ENCODE measurements at regions of chr5 and their contacts with region 1.

Region 1: GRCh38 chr5:66828548-66829357 is 232.6 kb downstream of the MAST4 start:
- DNase-seq: peak; percentile 84
- ATAC-seq: peak; percentile 98
- H3K4me3 Mint-ChIP-seq: peak overlapping the region; percentile 86
- H3K27ac Mint-ChIP-seq: peak overlapping the region; percentile 87
- H3K4me1 Mint-ChIP-seq: peaks cover 43% of the 10 kb centered on the region
- H3K27me3 Mint-ChIP-seq: no peaks in the 10 kb centered on the region

Region 2: GRCh38 chr5:66840511-66841013 is 11.8 kb after region 1 on chr5:
- CTCF ChIA-PET with region 1: interaction called, 97 read pairs
- POLR2A ChIA-PET with region 1: interaction called, 38 read pairs
- DNase-seq: peak; percentile 62
- ATAC-seq: peak; percentile 92
- H3K4me3 Mint-ChIP-seq: peak overlapping the region; percentile 34
- H3K27ac Mint-ChIP-seq: peak overlapping the region; percentile 90
- H3K4me1 Mint-ChIP-seq: peaks cover 57% of the 10 kb centered on the region
- H3K27me3 Mint-ChIP-seq: no peaks in the 10 kb centered on the region

Region 3: DNA sequence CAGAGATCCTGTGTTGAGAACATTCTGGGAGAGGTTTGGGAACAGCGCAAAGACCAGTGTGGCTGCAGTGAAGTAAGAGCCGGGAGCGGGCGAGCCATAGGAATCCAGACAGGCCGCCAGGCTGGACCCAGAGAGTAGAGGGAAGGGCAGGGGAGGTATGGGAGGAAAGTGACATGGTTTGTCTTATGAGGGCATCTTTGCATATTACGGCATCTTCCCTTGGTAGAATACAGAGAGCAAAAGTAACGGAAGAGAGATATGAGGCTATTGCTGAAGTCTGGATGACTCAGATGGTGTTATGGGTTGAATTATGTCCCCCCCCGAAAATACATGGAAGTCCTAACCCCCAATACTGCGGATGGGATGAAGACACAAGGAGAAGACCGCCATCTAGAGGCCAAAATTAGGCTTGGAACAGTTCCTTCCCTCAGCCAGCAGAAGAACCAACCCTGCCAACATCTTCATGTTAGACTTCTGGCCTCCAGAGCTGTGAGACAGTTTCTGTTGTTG is 35.6 kb after region 1 on chr5:
- CTCF ChIA-PET with region 1: interaction called, 12 read pairs
- POLR2A ChIA-PET with region 1: no interaction called
- DNase-seq: peak; percentile 50
- ATAC-seq: peak; percentile 70
- H3K4me3 Mint-ChIP-seq: no peak overlapping the region
- H3K27ac Mint-ChIP-seq: no peak overlapping the region
- H3K4me1 Mint-ChIP-seq: no peaks in the 10 kb centered on the region
- H3K27me3 Mint-ChIP-seq: peaks cover 19% of the 10 kb centered on the region